PC-3 (cell line): ENCODE measurements at regions of chr22 and their contacts with region 1.

Region 1: DNA sequence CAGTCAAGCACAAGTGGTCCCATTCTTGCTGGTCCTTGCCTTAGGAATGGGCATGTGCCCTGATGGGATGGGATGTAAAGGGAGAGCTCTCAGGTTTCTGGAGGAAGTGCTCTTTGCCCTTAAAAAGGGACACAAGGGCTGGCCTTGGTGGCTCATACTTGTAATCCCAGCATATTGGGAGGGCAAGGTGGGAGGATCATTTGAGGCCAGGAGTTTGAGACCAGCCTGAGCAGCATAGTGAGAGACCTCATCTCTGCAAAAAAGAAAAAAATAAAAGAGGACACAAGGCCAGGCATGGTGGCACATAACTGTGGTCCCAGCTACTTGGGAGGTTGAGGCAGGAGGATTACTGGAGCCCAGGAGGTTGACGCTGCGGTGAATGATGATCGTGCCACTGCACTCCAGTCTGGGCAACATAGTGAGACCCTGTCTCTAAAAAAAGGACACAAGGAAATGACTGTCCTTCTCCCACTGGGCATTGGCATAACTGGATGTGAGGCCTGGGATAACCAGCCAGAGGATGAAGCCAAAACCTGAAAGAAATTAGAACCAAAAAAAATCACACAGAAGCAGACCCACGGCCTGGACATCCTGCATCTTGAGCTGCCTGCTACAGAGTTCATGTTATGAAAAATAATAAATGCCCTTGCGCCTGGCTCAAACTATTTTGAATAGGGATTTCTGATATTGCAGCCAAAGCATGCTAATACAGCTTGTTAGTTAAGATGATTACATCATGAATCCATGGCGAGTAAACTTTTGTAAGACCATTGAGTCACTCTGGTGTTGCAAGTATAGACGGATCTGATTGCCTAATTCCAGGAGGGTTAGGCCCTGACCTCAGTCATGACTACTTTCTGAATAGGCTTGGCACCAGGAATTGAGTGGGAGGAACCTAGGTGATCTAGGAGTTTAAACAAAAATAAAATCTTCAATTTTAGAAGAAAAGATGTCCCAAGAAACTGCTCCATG is 12.9 kb upstream of the CRKL start:
- DNase-seq: peak; percentile 91
- ATAC-seq: peak; percentile 85
- H3K4me3 ChIP-seq: no peak overlapping the region
- H3K27ac ChIP-seq: peak overlapping the region; percentile 57
- H3K4me1 ChIP-seq: peaks cover 24% of the 10 kb centered on the region
- H3K27me3 ChIP-seq: no peaks in the 10 kb centered on the region
- CTCF ChIP-seq: no peak

Region 2: GRCh38 chr22:20890975-20891374 is 13.3 kb before region 1 on chr22:
- CTCF ChIA-PET with region 1: interaction called, 12 read pairs
- POLR2A ChIA-PET with region 1: no interaction called
- intact Hi-C with region 1: no loop called
- DNase-seq: no peak
- ATAC-seq: no peak
- H3K4me3 ChIP-seq: no peak overlapping the region
- H3K27ac ChIP-seq: no peak overlapping the region
- H3K4me1 ChIP-seq: peaks cover 9% of the 10 kb centered on the region
- H3K27me3 ChIP-seq: no peaks in the 10 kb centered on the region
- CTCF ChIP-seq: no peak